Activated CD4-positive, alpha-beta T cell treated with anti-CD3 and anti-CD28 coated beads for 36 hours (primary cell): ENCODE measurements at regions of chr2 and their contacts with region 1.

Region 1: GRCh38 chr2:191020221-191020741 is 6.3 kb upstream of the STAT1 start:
- DNase-seq: peak; percentile 96
- ATAC-seq: peak; percentile 62
- H3K4me3 Mint-ChIP-seq: no peak overlapping the region
- H3K27ac Mint-ChIP-seq: no peak overlapping the region
- H3K4me1 Mint-ChIP-seq: peaks cover 37% of the 10 kb centered on the region
- H3K27me3 Mint-ChIP-seq: no peaks in the 10 kb centered on the region

Region 2: GRCh38 chr2:190648289-190649034 is 371.8 kb before region 1 on chr2:
- CTCF ChIA-PET with region 1: no interaction called
- POLR2A ChIA-PET with region 1: no interaction called
- intact Hi-C with region 1: loop called in 1 of 2 experiments (anchors 2 kb)
- DNase-seq: peak; percentile 88
- ATAC-seq: peak; percentile 54
- H3K4me3 Mint-ChIP-seq: peak overlapping the region; percentile 67
- H3K27ac Mint-ChIP-seq: peak overlapping the region; percentile 81
- H3K4me1 Mint-ChIP-seq: peaks cover 46% of the 10 kb centered on the region
- H3K27me3 Mint-ChIP-seq: no peaks in the 10 kb centered on the region

Region 3: GRCh38 chr2:190791347-190791975 is 228.8 kb before region 1 on chr2:
- CTCF ChIA-PET with region 1: no interaction called
- POLR2A ChIA-PET with region 1: no interaction called
- intact Hi-C with region 1: loop called in 1 of 2 experiments (anchors 5 kb)
- DNase-seq: peak; percentile 73
- ATAC-seq: peak; percentile 70
- H3K4me3 Mint-ChIP-seq: peak overlapping the region; percentile 11
- H3K27ac Mint-ChIP-seq: peak overlapping the region; percentile 77
- H3K4me1 Mint-ChIP-seq: peaks cover 49% of the 10 kb centered on the region
- H3K27me3 Mint-ChIP-seq: no peaks in the 10 kb centered on the region

Region 4: GRCh38 chr2:190911813-190912212 is 108.5 kb before region 1 on chr2:
- CTCF ChIA-PET with region 1: no interaction called
- POLR2A ChIA-PET with region 1: no interaction called
- intact Hi-C with region 1: loop called in 1 of 2 experiments (anchors 5 kb)
- DNase-seq: no peak
- ATAC-seq: peak; percentile 94
- H3K4me3 Mint-ChIP-seq: no peak overlapping the region
- H3K27ac Mint-ChIP-seq: peak overlapping the region; percentile 73
- H3K4me1 Mint-ChIP-seq: peaks cover 46% of the 10 kb centered on the region
- H3K27me3 Mint-ChIP-seq: no peaks in the 10 kb centered on the region

Region 5: GRCh38 chr2:191030521-191031154 is 10.4 kb after region 1 on chr2:
- CTCF ChIA-PET with region 1: interaction called, 9 read pairs
- POLR2A ChIA-PET with region 1: no interaction called
- intact Hi-C with region 1: loop called in 1 of 2 experiments (anchors 1 kb)
- DNase-seq: peak; percentile 57
- ATAC-seq: peak; percentile 82
- H3K4me3 Mint-ChIP-seq: no peak overlapping the region
- H3K27ac Mint-ChIP-seq: peak overlapping the region; percentile 55
- H3K4me1 Mint-ChIP-seq: peaks cover 38% of the 10 kb centered on the region
- H3K27me3 Mint-ChIP-seq: no peaks in the 10 kb centered on the region

Region 6: GRCh38 chr2:191189112-191189635 is 168.9 kb after region 1 on chr2:
- CTCF ChIA-PET with region 1: no interaction called
- POLR2A ChIA-PET with region 1: no interaction called
- intact Hi-C with region 1: loop called in 1 of 2 experiments (anchors 1 kb)
- DNase-seq: no peak
- ATAC-seq: no peak
- H3K4me3 Mint-ChIP-seq: peak overlapping the region; percentile 19
- H3K27ac Mint-ChIP-seq: peak overlapping the region; percentile 68
- H3K4me1 Mint-ChIP-seq: peaks cover 63% of the 10 kb centered on the region
- H3K27me3 Mint-ChIP-seq: no peaks in the 10 kb centered on the region

Region 7: GRCh38 chr2:191617575-191617974 is 597.3 kb after region 1 on chr2:
- CTCF ChIA-PET with region 1: no interaction called
- POLR2A ChIA-PET with region 1: no interaction called
- intact Hi-C with region 1: loop called in 1 of 2 experiments (anchors 5 kb)
- DNase-seq: peak; percentile 61
- ATAC-seq: peak; percentile 80
- H3K4me3 Mint-ChIP-seq: peak overlapping the region; percentile 47
- H3K27ac Mint-ChIP-seq: peak overlapping the region; percentile 99
- H3K4me1 Mint-ChIP-seq: peaks cover 52% of the 10 kb centered on the region
- H3K27me3 Mint-ChIP-seq: no peaks in the 10 kb centered on the region